Activated naive CD8-positive, alpha-beta T cell treated with anti-CD3 and anti-CD28 coated beads, Interleukin-2, amount 10 ng/mL, durations not matched to agents 7 days and 5 days (primary cell): ENCODE measurements at regions of chr6 and their contacts with region 1.

Region 1: GRCh38 chr6:26054857-26055669 is 32.2 kb upstream of the HFE start:
- DNase-seq: peak; percentile 81
- ATAC-seq: peak; percentile 69
- H3K4me3 Mint-ChIP-seq: peak overlapping the region; percentile 96
- H3K27ac Mint-ChIP-seq: peak overlapping the region; percentile 100
- H3K4me1 Mint-ChIP-seq: peaks cover 32% of the 10 kb centered on the region
- H3K27me3 Mint-ChIP-seq: no peaks in the 10 kb centered on the region

Region 2: DNA sequence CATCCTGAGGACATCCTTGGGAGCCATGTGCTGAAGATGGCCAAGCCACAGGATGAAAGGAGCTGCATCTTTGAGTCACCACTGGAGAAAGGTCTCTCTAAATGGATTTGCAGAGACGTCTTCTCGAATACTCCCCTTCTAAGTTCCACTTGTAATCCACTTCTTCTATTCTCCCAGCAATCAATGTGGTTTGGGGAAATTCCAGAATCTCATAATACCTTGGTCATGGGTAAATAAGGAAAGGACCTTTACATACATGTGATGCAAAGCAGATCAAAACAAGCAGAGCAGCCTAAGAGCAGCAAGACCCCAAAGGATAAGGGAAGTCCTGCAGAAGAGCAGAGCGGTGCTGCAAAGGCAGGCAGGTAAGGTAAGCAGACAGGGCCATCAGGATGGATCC is 57.1 kb before region 1 on chr6:
- POLR2A ChIA-PET with region 1: no interaction called
- DNase-seq: no peak
- ATAC-seq: no peak
- H3K4me3 Mint-ChIP-seq: no peak overlapping the region
- H3K27ac Mint-ChIP-seq: no peak overlapping the region
- H3K4me1 Mint-ChIP-seq: peaks cover 11% of the 10 kb centered on the region
- H3K27me3 Mint-ChIP-seq: no peaks in the 10 kb centered on the region

Region 3: DNA sequence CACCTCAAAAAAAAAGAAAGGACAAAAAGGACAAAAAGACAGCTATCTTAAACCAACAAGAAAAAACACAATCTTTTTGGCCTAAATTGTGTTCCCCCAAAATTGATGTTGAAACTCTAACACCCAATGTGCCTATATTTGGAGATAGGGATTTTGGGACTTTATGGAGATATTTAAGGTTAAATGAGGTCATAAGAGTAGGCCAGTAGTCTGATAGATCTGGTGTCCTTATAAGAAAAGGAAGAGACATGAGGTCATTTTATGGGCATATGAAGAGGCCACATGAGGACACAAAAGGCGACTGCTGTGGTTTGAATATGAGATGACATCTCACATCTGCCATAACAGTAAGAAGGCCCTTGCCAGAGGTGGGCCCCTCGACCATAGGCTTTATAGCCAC is 43.0 kb before region 1 on chr6:
- POLR2A ChIA-PET with region 1: no interaction called
- DNase-seq: no peak
- ATAC-seq: no peak
- H3K4me3 Mint-ChIP-seq: no peak overlapping the region
- H3K27ac Mint-ChIP-seq: no peak overlapping the region
- H3K4me1 Mint-ChIP-seq: peaks cover 2% of the 10 kb centered on the region
- H3K27me3 Mint-ChIP-seq: no peaks in the 10 kb centered on the region

Region 4: DNA sequence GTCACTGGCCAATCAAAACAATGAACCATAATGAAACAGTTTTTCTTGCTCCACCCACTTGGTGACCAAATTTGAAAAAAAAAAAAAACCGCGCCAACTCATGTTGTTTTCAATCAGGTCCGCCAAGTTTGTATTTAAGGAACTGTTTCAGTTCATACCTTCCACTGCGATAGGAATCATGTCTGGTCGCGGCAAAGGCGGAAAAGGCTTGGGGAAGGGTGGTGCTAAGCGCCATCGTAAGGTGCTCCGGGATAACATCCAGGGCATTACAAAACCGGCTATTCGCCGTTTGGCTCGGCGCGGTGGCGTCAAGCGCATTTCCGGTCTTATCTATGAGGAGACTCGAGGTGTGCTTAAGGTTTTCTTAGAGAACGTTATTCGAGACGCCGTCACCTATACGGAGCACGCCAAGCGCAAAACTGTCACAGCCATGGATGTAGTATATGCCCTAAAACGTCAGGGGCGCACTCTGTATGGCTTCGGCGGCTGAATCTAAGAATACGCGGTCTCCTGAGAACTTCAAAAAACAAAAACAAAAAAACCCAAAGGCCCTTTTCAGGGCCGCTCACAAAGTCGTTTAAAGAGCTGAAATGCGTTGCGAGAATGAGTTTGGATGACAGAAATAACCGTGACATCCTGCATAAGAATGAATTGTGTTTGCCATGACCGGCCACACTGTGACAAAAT is 48.9 kb after region 1 on chr6:
- POLR2A ChIA-PET with region 1: interaction called, 223 read pairs
- DNase-seq: peak; percentile 86
- ATAC-seq: peak; percentile 89
- H3K4me3 Mint-ChIP-seq: peak overlapping the region; percentile 93
- H3K27ac Mint-ChIP-seq: peak overlapping the region; percentile 100
- H3K4me1 Mint-ChIP-seq: peaks cover 18% of the 10 kb centered on the region
- H3K27me3 Mint-ChIP-seq: no peaks in the 10 kb centered on the region

Region 5: DNA sequence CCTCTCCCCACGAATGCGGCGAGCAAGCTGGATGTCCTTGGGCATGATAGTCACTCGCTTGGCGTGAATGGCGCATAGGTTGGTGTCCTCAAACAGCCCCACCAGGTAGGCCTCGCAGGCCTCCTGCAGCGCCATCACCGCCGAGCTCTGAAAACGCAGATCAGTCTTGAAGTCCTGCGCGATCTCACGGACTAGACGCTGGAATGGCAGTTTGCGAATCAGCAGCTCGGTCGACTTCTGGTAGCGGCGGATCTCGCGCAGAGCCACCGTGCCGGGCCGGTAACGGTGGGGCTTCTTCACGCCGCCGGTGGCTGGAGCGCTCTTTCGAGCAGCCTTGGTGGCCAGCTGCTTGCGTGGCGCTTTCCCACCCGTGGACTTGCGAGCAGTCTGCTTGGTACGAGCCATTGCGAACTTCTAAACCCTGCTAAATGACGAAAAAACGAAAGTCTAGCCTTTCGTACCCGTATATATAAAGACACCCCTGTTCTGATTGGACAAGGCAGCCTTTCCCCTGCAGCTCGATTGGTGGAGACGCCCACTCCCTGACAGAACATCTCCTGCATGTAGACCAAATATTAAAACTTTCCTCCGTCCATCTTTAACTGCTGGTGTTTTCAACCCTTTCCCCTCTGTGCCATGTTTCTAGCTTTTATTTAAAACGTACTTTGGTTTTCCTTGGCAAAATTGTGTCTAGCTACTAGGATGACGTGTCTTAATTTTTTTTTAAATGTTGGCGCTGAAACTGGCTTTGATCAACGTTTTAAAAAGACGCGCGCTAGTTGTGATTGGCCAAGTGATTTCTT is 142.0 kb after region 1 on chr6:
- POLR2A ChIA-PET with region 1: interaction called, 82 read pairs
- DNase-seq: peak; percentile 83
- ATAC-seq: peak; percentile 44
- H3K4me3 Mint-ChIP-seq: peak overlapping the region; percentile 87
- H3K27ac Mint-ChIP-seq: peak overlapping the region; percentile 96
- H3K4me1 Mint-ChIP-seq: peaks cover 48% of the 10 kb centered on the region
- H3K27me3 Mint-ChIP-seq: no peaks in the 10 kb centered on the region

Region 6: GRCh38 chr6:26216356-26216885 is 161.4 kb after region 1 on chr6:
- POLR2A ChIA-PET with region 1: interaction called, 36 read pairs
- DNase-seq: peak; percentile 77
- ATAC-seq: peak; percentile 75
- H3K4me3 Mint-ChIP-seq: no peak overlapping the region
- H3K27ac Mint-ChIP-seq: no peak overlapping the region
- H3K4me1 Mint-ChIP-seq: peaks cover 32% of the 10 kb centered on the region
- H3K27me3 Mint-ChIP-seq: no peaks in the 10 kb centered on the region

Region 7: GRCh38 chr6:26295691-26296555 is 240.9 kb after region 1 on chr6:
- POLR2A ChIA-PET with region 1: no interaction called
- DNase-seq: no peak
- ATAC-seq: peak; percentile 54
- H3K4me3 Mint-ChIP-seq: peak overlapping the region; percentile 44
- H3K27ac Mint-ChIP-seq: peak overlapping the region; percentile 75
- H3K4me1 Mint-ChIP-seq: peaks cover 10% of the 10 kb centered on the region
- H3K27me3 Mint-ChIP-seq: no peaks in the 10 kb centered on the region

Region 8: DNA sequence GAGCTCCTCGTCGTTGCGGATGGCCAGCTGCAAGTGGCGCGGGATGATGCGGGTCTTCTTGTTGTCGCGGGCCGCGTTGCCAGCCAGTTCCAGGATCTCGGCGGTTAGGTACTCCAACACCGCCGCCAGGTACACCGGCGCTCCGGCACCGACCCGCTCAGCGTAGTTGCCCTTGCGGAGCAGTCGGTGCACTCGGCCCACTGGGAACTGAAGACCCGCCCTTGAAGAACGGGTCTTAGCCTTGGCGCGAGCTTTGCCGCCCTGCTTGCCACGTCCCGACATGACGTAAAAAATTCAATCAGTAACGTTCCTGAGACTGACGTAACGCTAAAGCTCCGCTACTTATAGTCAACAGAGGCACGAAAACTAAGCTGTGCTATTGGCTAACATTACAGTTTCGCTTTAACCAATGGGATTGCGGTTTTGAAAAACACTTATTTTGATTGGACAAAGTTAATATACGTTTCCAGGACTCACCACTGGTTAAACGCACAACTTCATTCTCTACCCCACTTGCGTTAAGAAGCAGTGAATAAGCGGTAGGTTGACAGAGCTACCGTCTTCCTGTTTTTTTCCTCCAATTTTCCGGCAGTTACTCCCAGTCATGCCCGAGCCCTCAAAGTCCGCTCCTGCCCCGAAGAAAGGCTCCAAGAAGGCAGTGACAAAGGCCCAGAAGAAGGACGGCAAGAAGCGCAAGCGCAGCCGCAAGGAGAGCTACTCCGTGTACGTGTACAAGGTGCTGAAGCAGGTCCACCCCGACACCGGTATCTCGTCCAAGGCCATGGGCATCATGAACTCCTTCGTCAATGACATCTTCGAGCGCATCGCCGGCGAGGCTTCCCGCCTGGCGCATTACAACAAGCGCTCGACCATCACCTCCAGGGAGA is 1783.2 kb after region 1 on chr6:
- POLR2A ChIA-PET with region 1: interaction called, 15 read pairs
- DNase-seq: peak; percentile 84
- ATAC-seq: peak; percentile 74
- H3K4me3 Mint-ChIP-seq: no peak overlapping the region
- H3K27ac Mint-ChIP-seq: no peak overlapping the region
- H3K4me1 Mint-ChIP-seq: peaks cover 26% of the 10 kb centered on the region
- H3K27me3 Mint-ChIP-seq: peaks cover 2% of the 10 kb centered on the region